A673 (cell line): ENCODE measurements at regions of chr10 and their contacts with region 1.

Region 1: DNA sequence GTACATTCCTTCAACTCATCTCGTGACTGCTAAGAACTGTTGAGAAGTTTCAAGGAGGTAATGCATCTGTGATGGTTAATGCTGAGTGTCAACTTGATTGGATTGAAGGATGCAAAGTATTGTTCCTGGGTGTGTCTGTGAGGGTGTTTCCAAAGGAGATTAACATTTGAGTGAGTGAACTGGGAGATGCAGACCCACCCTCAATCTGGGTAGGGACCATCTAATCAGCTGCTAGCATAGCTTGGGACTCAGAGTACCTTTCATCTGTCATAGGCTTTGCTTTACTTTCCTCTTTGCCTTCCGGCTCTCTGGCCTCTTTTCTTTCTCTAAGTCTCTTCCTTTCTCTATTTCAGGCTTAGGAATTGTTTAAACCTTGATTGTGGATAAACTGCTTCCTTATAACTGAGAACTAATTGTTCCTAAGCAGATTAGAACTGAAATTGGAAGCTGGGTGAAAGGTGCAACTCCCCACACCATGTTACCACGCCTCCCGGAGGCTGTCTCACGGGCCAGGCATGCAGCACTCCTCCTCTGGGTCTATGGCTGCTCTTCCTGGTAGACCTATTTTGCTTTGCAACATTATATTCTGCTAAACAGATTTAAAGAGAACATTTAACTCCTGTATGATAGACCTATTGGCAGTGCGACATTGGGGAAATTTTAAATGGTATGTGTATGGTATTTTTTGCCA is 298.2 kb downstream of the CCSER2 start:
- DNase-seq: no peak
- H3K4me3 ChIP-seq: no peak overlapping the region
- H3K27ac ChIP-seq: no peak overlapping the region
- H3K4me1 ChIP-seq: no peaks in the 10 kb centered on the region
- H3K27me3 ChIP-seq: peaks cover 24% of the 10 kb centered on the region
- CTCF ChIP-seq: no peak

Region 2: GRCh38 chr10:84574102-84574501 is 52.4 kb before region 1 on chr10:
- CTCF ChIA-PET with region 1: no interaction called
- POLR2A ChIA-PET with region 1: interaction called, 10 read pairs
- intact Hi-C with region 1: no loop called
- DNase-seq: peak; percentile 8
- H3K4me3 ChIP-seq: no peak overlapping the region
- H3K27ac ChIP-seq: no peak overlapping the region
- H3K4me1 ChIP-seq: no peaks in the 10 kb centered on the region
- H3K27me3 ChIP-seq: peaks cover 10% of the 10 kb centered on the region
- CTCF ChIP-seq: peak; percentile 35

Region 3: DNA sequence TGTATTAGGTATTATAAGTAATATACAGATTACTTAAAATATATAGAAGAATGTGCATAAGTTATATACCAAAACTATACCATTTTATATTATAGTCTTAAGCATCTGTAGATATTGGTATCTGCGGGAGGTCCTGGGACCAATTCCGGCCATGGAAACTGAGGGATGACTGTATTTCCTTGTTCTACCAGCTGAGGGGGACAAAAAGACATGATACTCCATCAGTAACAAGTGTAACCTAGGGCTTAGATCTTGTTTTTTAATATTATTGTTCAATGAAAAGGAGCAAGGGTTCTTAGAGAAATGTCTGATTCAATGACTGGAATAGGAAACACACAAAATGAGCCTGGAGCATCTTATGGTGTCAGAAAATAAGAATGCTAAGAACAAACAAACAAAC is 454.4 kb after region 1 on chr10:
- CTCF ChIA-PET with region 1: no interaction called
- POLR2A ChIA-PET with region 1: no interaction called
- intact Hi-C with region 1: no loop called
- DNase-seq: no peak
- H3K4me3 ChIP-seq: no peak overlapping the region
- H3K27ac ChIP-seq: no peak overlapping the region
- H3K4me1 ChIP-seq: no peaks in the 10 kb centered on the region
- H3K27me3 ChIP-seq: no peaks in the 10 kb centered on the region
- CTCF ChIP-seq: no peak